Mammary epithelial cell (primary cell): ENCODE measurements at regions of chr12 and their contacts with region 1.

Region 1: GRCh38 chr12:75658901-75659383 is 147.5 kb upstream of the KRR1 start:
- DNase-seq: peak; percentile 86
- H3K4me3 ChIP-seq: no peak overlapping the region
- H3K27ac ChIP-seq: peak overlapping the region; percentile 98
- H3K4me1 ChIP-seq: peaks cover 66% of the 10 kb centered on the region
- H3K27me3 ChIP-seq: no peaks in the 10 kb centered on the region
- CTCF ChIP-seq: no peak

Region 2: GRCh38 chr12:75419841-75420240 is 239.1 kb before region 1 on chr12:
- CTCF ChIA-PET with region 1: no interaction called
- dilution Hi-C with region 1: no loop called
- in situ Hi-C with region 1: no loop called
- intact Hi-C with region 1: no loop called
- DNase-seq: no peak
- H3K4me3 ChIP-seq: no peak overlapping the region
- H3K27ac ChIP-seq: no peak overlapping the region
- H3K4me1 ChIP-seq: no peaks in the 10 kb centered on the region
- H3K27me3 ChIP-seq: no peaks in the 10 kb centered on the region
- CTCF ChIP-seq: no peak

Region 3: GRCh38 chr12:75623631-75624118 is 35.3 kb before region 1 on chr12:
- CTCF ChIA-PET with region 1: no interaction called
- dilution Hi-C with region 1: no loop called
- in situ Hi-C with region 1: no loop called
- intact Hi-C with region 1: loop called (anchors 1 kb)
- DNase-seq: peak; percentile 53
- H3K4me3 ChIP-seq: no peak overlapping the region
- H3K27ac ChIP-seq: peak overlapping the region; percentile 18
- H3K4me1 ChIP-seq: peaks cover 9% of the 10 kb centered on the region
- H3K27me3 ChIP-seq: no peaks in the 10 kb centered on the region
- CTCF ChIP-seq: peak; percentile 30 to 60

Region 4: DNA sequence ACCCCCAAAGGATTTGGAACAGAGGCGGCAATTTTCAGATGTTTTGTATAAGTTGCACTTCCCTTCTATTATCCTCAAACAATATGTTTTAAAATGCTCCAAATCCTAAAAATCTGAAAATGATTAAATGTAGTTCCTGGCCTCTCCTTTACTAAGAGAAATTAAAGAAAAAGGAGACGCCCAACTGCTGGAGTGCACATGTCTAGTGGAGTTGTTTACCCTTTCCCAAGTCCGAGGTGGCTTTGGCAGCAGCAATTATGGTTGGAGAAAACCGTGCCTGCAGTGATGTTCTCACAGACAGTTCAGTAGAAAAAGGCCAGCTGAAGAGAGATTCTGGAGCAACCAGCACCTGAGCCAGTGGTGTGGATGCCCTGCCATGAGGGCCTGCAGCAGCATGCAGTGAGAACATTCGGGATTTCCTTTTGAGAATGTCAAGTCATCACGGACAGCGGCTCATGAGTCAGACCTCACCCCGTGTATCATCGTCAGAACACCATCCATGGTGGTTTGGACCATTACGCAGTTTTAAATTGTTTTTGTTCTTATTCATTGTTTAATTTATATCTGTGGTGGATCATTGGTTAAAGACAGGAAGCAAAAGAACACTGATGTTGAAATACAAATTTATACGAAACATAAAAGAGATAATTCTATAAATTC is 31.5 kb after region 1 on chr12:
- CTCF ChIA-PET with region 1: no interaction called
- dilution Hi-C with region 1: no loop called
- in situ Hi-C with region 1: no loop called
- intact Hi-C with region 1: loop called (anchors 1 kb)
- DNase-seq: peak; percentile 99
- H3K4me3 ChIP-seq: no peak overlapping the region
- H3K27ac ChIP-seq: peak overlapping the region; percentile 97
- H3K4me1 ChIP-seq: peaks cover 21% of the 10 kb centered on the region
- H3K27me3 ChIP-seq: no peaks in the 10 kb centered on the region
- CTCF ChIP-seq: no peak

Region 5: DNA sequence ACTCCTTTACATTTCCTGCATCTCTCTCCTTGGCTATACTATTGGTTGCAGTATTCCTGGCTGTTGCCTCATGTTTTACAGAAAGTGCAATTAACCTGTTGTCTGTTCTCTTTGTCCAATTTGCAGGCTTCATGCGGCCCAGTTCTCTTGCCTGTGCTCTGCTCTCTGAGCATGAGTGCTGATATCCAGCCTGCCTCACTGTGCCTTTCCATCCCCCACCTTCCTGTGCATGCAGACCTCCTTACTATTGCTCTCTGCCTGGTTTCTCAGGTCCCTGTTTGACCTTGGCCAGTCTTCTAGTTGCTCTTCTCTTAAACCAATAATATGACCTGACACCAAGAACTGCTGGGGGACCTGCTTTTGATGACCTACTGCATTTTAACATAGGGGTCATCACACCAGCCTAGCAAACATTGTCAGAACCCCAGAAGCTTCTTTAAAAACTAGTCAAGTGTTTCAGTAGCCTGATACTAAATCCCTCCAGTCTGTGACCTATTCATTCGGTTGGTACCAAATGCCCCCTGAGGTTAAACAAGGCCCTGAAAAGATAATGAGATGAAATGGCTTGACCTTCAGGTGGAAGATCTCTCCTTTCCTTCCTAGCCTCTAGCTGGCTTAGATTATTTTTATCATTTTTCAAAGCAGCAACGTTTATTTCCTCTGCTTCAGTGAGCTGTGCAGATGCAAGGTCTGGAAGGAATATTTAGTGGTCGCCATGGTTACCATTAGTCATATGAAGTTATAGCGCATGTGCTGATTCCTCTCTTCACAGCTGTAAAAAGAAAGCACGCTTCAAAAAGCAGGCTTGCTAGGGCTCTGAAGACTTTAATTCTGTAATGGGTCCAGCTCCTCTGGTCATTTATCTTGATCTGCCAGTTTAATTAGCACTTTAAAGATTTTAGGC is 156.2 kb after region 1 on chr12:
- CTCF ChIA-PET with region 1: no interaction called
- dilution Hi-C with region 1: no loop called
- in situ Hi-C with region 1: no loop called
- intact Hi-C with region 1: loop called (anchors 5 kb)
- DNase-seq: peak; percentile 66
- H3K4me3 ChIP-seq: no peak overlapping the region
- H3K27ac ChIP-seq: peak overlapping the region; percentile 60
- H3K4me1 ChIP-seq: peaks cover 23% of the 10 kb centered on the region
- H3K27me3 ChIP-seq: no peaks in the 10 kb centered on the region
- CTCF ChIP-seq: no peak

Region 6: GRCh38 chr12:75954041-75954440 is 295.1 kb after region 1 on chr12:
- CTCF ChIA-PET with region 1: no interaction called
- dilution Hi-C with region 1: no loop called
- in situ Hi-C with region 1: no loop called
- intact Hi-C with region 1: loop called (anchors 2 kb)
- DNase-seq: peak; percentile 95
- H3K4me3 ChIP-seq: no peak overlapping the region
- H3K27ac ChIP-seq: peak overlapping the region; percentile 94
- H3K4me1 ChIP-seq: peaks cover 22% of the 10 kb centered on the region
- H3K27me3 ChIP-seq: no peaks in the 10 kb centered on the region
- CTCF ChIP-seq: no peak

Region 7: DNA sequence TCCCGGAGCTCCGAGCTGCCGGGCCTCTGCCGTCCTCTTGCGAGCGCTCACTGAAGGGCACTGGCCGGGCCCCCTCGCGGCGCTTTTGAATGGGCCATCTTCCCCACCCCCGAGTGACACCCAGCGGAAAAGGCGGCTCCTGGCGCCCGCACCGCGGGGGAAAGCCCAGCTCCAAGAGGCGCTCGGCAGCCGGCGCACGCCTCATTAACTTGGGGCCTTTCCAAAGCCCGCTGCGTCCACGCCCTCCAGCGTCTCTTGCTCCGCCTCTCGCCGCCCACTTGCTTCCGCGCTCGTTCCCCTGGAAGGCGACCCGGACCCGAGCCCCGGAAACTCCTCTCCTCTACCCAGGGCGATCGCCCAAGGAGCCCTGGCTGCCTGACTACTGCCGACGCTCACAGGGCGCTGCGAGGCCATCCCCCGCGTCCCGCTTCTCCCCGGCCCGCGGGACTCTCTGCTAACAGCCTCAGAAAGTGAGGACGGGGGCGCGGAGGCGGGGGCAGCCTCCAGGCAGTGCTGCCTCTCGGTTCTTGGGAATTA is 372.7 kb after region 1 on chr12 and contains the start of gene PHLDA1:
- CTCF ChIA-PET with region 1: no interaction called
- dilution Hi-C with region 1: no loop called
- in situ Hi-C with region 1: loop called in 1 of 2 experiments (anchors 10 kb)
- intact Hi-C with region 1: loop called (anchors 1 kb)
- DNase-seq: peak; percentile 98
- H3K4me3 ChIP-seq: peak within 1 kb of the TSS; percentile 87 to 96 (median 93)
- H3K27ac ChIP-seq: peak within 1 kb of the TSS; percentile 93
- H3K4me1 ChIP-seq: peaks cover 9% of the 10 kb centered on the region
- H3K27me3 ChIP-seq: no peaks in the 10 kb centered on the region
- CTCF ChIP-seq: peak; percentile 26 to 79
- total RNA-seq, gene PHLDA1: 161 to 545 TPM